ENCODE measurements at regions of chrX and their contacts with region 1.

Region 1: DNA sequence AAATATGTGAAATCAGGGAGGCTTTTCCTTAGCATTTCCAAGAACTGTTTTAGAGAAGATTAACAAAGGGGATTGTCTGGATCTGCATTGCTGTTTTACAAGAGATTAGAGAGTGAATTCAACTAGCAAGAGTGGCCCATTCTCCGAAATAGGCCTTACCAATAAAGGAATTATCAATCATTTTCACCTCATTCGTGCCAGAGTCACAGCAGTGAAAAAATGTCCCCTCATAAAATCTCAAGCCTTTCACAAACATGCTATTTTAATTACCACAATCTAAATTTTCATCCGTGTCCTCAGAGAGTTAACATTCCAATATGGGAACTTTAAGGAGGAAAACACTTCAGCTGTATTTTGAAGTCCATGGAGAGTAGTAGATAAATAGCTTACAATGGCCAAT is 979.6 kb downstream of the RPA4 start:
- DNase-seq: no peak
- H3K4me3 ChIP-seq: no peak overlapping the region
- H3K27ac ChIP-seq: no peak overlapping the region
- H3K4me1 ChIP-seq: no peaks in the 10 kb centered on the region
- H3K27me3 ChIP-seq: no peaks in the 10 kb centered on the region
- CTCF ChIP-seq: no peak

Region 2: GRCh38 chrX:97691901-97692455 is 171.3 kb before region 1 on chrX:
- CTCF ChIA-PET with region 1: interaction called, 16 read pairs
- POLR2A ChIA-PET with region 1: no interaction called
- intact Hi-C with region 1: no loop called
- DNase-seq: peak; percentile 32
- H3K4me3 ChIP-seq: no peak overlapping the region
- H3K27ac ChIP-seq: no peak overlapping the region
- H3K4me1 ChIP-seq: peaks cover 5% of the 10 kb centered on the region
- H3K27me3 ChIP-seq: no peaks in the 10 kb centered on the region
- CTCF ChIP-seq: no peak

Measured in A673 (cell line).